OCI-LY7 (cell line): ENCODE measurements at regions of chr10 and their contacts with region 1.

Region 1: GRCh38 chr10:129123428-129123827 is 343.6 kb upstream of the MGMT start:
- DNase-seq: no peak
- H3K4me3 ChIP-seq: no peak overlapping the region
- H3K27ac ChIP-seq: no peak overlapping the region
- H3K4me1 ChIP-seq: no peaks in the 10 kb centered on the region
- CTCF ChIP-seq: no peak

Region 2: GRCh38 chr10:130662775-130663174 is 1539.3 kb after region 1 on chr10:
- CTCF ChIA-PET with region 1: no interaction called
- POLR2A ChIA-PET with region 1: interaction called, 11 read pairs
- intact Hi-C with region 1: no loop called
- DNase-seq: no peak
- H3K4me3 ChIP-seq: no peak overlapping the region
- H3K27ac ChIP-seq: no peak overlapping the region
- H3K4me1 ChIP-seq: no peaks in the 10 kb centered on the region
- CTCF ChIP-seq: no peak